Activated CD8-positive, alpha-beta T cell treated with anti-CD3 and anti-CD28 coated beads, Interleukin-2, amount 10 ng/mL, durations not matched to agents 7 days and 5 days (primary cell): ENCODE measurements at regions of chr9 and their contacts with region 1.

Region 1: GRCh38 chr9:21395778-21396717 is 10.8 kb upstream of the IFNA2 start:
- DNase-seq: peak; percentile 70
- ATAC-seq: peak; percentile 86
- H3K4me3 Mint-ChIP-seq: peak overlapping the region; percentile 48
- H3K27ac Mint-ChIP-seq: no peak overlapping the region
- H3K4me1 Mint-ChIP-seq: peaks cover 5% of the 10 kb centered on the region
- H3K27me3 Mint-ChIP-seq: peaks cover 53% of the 10 kb centered on the region

Region 2: DNA sequence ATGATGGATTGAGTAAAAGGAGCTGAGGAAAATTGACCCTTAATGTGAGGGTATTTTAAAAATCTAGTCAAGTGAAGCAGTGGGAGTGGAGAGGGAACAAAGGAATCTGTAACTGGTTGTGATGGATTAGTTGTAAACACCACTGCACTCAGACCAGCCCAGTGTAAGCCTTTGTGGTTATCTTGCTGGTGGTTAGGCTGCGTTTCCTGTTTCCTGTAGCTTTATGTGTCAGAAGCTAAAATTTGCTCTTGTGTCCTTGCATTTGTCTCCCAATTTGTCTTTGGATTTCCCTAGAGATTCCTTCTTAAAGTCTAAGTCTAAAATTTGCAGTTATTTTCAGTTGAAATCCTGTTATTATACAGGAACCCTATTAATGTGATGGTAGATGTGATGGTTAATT is 235.9 kb before region 1 on chr9:
- CTCF ChIA-PET with region 1: no interaction called
- POLR2A ChIA-PET with region 1: no interaction called
- DNase-seq: peak; percentile 80
- ATAC-seq: peak; percentile 88
- H3K4me3 Mint-ChIP-seq: peak overlapping the region; percentile 60
- H3K27ac Mint-ChIP-seq: peak overlapping the region; percentile 73
- H3K4me1 Mint-ChIP-seq: peaks cover 55% of the 10 kb centered on the region
- H3K27me3 Mint-ChIP-seq: no peaks in the 10 kb centered on the region

Region 3: DNA sequence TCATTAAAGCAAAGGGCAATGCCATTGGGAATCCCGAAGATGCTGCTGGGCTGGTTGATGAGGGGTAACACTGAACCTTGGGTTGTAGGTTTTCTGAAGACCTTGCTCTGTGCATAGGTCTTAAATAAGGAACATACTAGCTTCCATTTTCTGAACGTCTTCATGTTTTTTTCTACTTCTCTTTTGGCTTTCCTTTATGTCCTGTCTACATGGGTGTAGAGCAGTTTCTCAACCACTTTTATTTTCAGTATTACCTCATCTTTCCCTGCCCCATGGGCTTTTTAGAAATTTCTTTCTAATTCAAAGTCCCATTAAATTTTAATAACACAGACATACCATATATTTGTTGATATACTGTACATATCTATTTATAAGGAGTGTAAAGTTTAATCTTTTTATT is 156.1 kb before region 1 on chr9 and contains the start of gene IFNA14:
- CTCF ChIA-PET with region 1: interaction called, 15 read pairs
- POLR2A ChIA-PET with region 1: no interaction called
- DNase-seq: no peak
- ATAC-seq: no peak
- H3K4me3 Mint-ChIP-seq: no peak within 1 kb of the TSS
- H3K27ac Mint-ChIP-seq: no peak within 1 kb of the TSS
- H3K4me1 Mint-ChIP-seq: peaks cover 15% of the 10 kb centered on the region
- H3K27me3 Mint-ChIP-seq: peaks cover 30% of the 10 kb centered on the region
- total RNA-seq, gene IFNA14: not detected

Region 4: GRCh38 chr9:21317956-21318923 is 77.8 kb before region 1 on chr9:
- CTCF ChIA-PET with region 1: interaction called, 71 read pairs
- POLR2A ChIA-PET with region 1: no interaction called
- DNase-seq: peak; percentile 57
- ATAC-seq: peak; percentile 74
- H3K4me3 Mint-ChIP-seq: no peak overlapping the region
- H3K27ac Mint-ChIP-seq: no peak overlapping the region
- H3K4me1 Mint-ChIP-seq: peaks cover 1% of the 10 kb centered on the region
- H3K27me3 Mint-ChIP-seq: no peaks in the 10 kb centered on the region

Region 5: GRCh38 chr9:21334701-21335632 is 61.1 kb before region 1 on chr9 and contains the start of gene KLHL9:
- CTCF ChIA-PET with region 1: interaction called, 123 read pairs
- POLR2A ChIA-PET with region 1: no interaction called
- DNase-seq: peak; percentile 90
- ATAC-seq: peak; percentile 90
- H3K4me3 Mint-ChIP-seq: peak within 1 kb of the TSS; percentile 89
- H3K27ac Mint-ChIP-seq: peak within 1 kb of the TSS; percentile 91
- H3K4me1 Mint-ChIP-seq: peaks cover 45% of the 10 kb centered on the region
- H3K27me3 Mint-ChIP-seq: peaks cover 11% of the 10 kb centered on the region
- total RNA-seq, gene KLHL9: 17.9 to 18.8 TPM

Region 6: GRCh38 chr9:21357479-21358460 is 38.3 kb before region 1 on chr9:
- CTCF ChIA-PET with region 1: interaction called, 19 read pairs
- POLR2A ChIA-PET with region 1: no interaction called
- DNase-seq: no peak
- ATAC-seq: peak; percentile 81
- H3K4me3 Mint-ChIP-seq: peak overlapping the region; percentile 60
- H3K27ac Mint-ChIP-seq: peak overlapping the region; percentile 88
- H3K4me1 Mint-ChIP-seq: peaks cover 19% of the 10 kb centered on the region
- H3K27me3 Mint-ChIP-seq: peaks cover under 1% of the 10 kb centered on the region

Region 7: GRCh38 chr9:21413624-21414023 is 17.6 kb after region 1 on chr9:
- CTCF ChIA-PET with region 1: interaction called, 15 read pairs
- POLR2A ChIA-PET with region 1: no interaction called
- DNase-seq: no peak
- ATAC-seq: peak; percentile 47
- H3K4me3 Mint-ChIP-seq: no peak overlapping the region
- H3K27ac Mint-ChIP-seq: no peak overlapping the region
- H3K4me1 Mint-ChIP-seq: peaks cover 5% of the 10 kb centered on the region
- H3K27me3 Mint-ChIP-seq: peaks cover 21% of the 10 kb centered on the region

Region 8: DNA sequence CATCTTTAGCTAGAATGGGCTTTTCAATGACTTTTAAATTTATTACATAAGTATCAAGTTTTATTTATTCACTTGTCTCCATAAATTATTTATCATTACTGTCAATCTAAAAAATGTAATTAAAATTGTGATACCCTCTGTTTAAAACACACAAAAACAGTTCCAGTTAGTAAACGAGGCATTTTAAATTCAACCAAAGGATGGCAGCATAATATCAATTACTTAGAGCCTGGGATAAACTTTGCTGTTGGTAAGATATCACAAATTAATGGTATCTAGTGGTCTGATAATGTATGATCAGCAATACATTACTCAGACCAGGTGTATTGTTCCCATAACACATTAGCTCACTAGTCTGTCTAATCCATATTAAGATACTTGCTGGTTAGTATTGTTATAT is 95.7 kb after region 1 on chr9:
- CTCF ChIA-PET with region 1: no interaction called
- POLR2A ChIA-PET with region 1: no interaction called
- DNase-seq: no peak
- ATAC-seq: no peak
- H3K4me3 Mint-ChIP-seq: no peak overlapping the region
- H3K27ac Mint-ChIP-seq: no peak overlapping the region
- H3K4me1 Mint-ChIP-seq: no peaks in the 10 kb centered on the region
- H3K27me3 Mint-ChIP-seq: no peaks in the 10 kb centered on the region